ENCODE measurements at regions of chr15 and their contacts with region 1.

Region 1: GRCh38 chr15:52005748-52006701 is 13.0 kb upstream of the MAPK6 start:
- DNase-seq: peak; percentile 31
- ATAC-seq: peak; percentile 41
- H3K4me3 ChIP-seq: no peak overlapping the region
- H3K4me3 Mint-ChIP-seq: peak overlapping the region; percentile 40
- H3K27ac ChIP-seq: peak overlapping the region in 1 of 2 donors; percentile 59
- H3K27ac Mint-ChIP-seq: peak overlapping the region; percentile 52
- H3K4me1 ChIP-seq: peaks cover 20 to 31% of the 10 kb centered on the region in 2 donors
- H3K4me1 Mint-ChIP-seq: peaks cover 33% of the 10 kb centered on the region
- H3K27me3 ChIP-seq: no peaks in the 10 kb centered on the region
- H3K27me3 Mint-ChIP-seq: no peaks in the 10 kb centered on the region
- CTCF ChIP-seq: no peak

Region 2: DNA sequence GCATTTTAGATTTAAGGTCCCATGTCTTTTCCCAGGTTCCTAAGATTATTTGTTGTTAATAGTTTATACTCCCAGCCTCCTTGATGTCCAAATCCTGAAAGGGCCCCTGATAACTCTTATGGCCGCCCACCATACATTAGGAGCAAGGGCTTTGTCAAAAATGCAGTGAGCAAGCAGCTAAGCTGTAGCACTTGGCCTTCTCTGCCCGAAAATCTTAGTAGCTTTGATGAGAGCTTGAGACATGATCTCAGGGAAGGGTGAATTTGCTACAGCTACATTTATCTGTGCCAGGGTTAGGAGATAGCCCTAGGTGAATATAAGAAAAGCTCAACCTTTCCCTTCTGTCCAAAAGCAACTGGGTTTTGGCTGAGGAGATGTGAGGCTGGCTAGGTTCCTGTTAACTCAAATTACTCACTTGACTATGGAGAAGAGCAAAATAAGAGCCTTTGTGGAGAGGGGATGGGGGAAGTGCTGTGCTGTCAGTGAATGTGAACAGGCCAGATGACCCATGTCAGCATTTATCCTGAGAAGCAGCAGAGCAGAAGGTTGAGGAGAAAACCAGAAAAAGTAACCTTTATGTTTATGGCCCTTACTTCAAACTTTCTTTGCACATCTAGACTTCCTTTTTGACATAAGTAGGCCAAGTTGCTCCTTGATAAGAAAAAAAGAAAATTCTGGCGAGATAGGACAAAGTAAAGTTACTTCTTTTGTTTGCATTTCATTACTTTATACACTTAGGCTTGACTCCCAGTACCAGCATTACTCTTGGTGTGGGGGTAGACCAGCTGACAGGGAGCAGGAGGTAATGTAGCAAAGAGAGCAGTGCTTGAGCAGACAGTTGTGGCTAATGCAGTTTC is 34.1 kb after region 1 on chr15:
- CTCF ChIA-PET with region 1: no interaction called
- POLR2A ChIA-PET with region 1: no interaction called
- intact Hi-C with region 1: loop called (anchors 5 kb)
- DNase-seq: no peak
- ATAC-seq: no peak
- H3K4me3 ChIP-seq: no peak overlapping the region
- H3K4me3 Mint-ChIP-seq: no peak overlapping the region
- H3K27ac ChIP-seq: no peak overlapping the region
- H3K27ac Mint-ChIP-seq: no peak overlapping the region
- H3K4me1 ChIP-seq: peaks cover 0 to 3% of the 10 kb centered on the region in 2 donors
- H3K4me1 Mint-ChIP-seq: peaks cover 37% of the 10 kb centered on the region
- H3K27me3 ChIP-seq: no peaks in the 10 kb centered on the region
- H3K27me3 Mint-ChIP-seq: no peaks in the 10 kb centered on the region
- CTCF ChIP-seq: no peak